Activated CD8-positive, alpha-beta T cell treated with anti-CD3 and anti-CD28 coated beads for 36 hours (primary cell): ENCODE measurements at regions of chr14 and their contacts with region 1.

Region 1: DNA sequence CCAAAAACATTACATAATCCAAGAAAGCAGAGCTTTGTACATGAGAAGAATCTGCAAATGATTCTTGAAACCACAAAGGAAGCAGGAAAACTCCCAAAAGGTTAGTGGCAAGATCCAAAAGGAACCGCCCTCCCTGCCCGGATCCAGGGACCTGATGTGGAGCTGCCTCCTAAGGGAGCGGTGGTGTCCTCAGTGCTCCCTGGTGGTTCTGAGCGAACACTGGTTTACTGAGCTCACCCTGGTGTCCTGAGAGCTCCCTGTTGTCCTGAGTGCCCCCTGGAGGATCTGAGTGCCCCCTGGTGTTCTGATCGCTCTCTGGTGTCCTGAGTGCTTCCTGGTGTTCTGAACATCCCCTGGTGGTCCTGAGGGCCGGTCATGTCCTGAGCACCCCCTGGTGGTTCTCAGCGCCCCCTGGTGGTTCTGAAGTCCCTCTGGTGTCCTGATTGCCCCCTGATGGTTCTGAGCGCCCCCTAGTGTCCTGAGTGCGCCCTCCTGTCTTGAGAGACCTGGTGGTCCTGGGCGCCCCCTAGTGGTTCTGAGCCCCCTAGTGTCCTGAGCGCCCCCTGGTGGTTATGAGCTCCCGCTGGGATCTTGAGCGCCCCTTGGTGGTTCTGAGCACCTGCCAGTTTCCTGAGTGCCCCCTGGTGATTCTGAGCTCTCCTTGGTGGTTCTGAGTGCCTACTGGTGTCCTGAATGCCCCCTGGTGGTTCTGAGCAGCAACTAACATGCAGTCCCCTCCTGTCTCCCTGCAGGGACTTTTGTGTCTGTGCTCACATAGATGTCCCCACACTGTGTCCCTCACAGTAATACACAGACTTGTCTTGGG is 891.1 kb downstream of the TMEM121 start:
- DNase-seq: peak; percentile 100
- ATAC-seq: peak; percentile 97
- H3K4me3 Mint-ChIP-seq: no peak overlapping the region
- H3K27ac Mint-ChIP-seq: no peak overlapping the region
- H3K4me1 Mint-ChIP-seq: no peaks in the 10 kb centered on the region
- H3K27me3 Mint-ChIP-seq: peaks cover 2% of the 10 kb centered on the region
- CTCF ChIP-seq: peak; percentile 100

Region 2: DNA sequence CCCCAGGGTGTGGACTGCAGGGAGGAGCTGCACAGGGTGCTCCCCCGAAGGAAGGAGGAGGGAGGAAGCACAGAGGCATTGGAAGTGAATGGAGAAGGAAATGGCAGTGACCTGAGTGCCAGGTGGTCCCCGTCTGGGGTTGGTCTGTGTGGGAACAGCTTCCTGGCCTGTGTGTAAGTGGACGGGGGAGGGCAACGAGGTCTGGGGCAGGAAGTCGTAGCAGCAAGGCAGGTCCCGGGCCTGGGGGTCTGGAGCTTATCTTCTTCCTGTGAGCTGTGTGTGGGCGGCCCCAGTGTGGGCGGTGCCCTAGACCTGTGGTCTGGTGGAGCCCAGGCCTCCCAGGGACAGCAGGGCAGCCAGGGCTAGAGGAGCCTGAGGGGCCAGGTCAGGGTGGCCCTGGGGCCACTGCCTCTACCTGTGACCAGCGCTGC is 508.9 kb before region 1 on chr14:
- CTCF ChIA-PET with region 1: no interaction called
- POLR2A ChIA-PET with region 1: no interaction called
- intact Hi-C with region 1: no loop called
- DNase-seq: peak; percentile 37
- ATAC-seq: no peak
- H3K4me3 Mint-ChIP-seq: no peak overlapping the region
- H3K27ac Mint-ChIP-seq: no peak overlapping the region
- H3K4me1 Mint-ChIP-seq: peaks cover 3% of the 10 kb centered on the region
- H3K27me3 Mint-ChIP-seq: no peaks in the 10 kb centered on the region
- CTCF ChIP-seq: no peak

Region 3: DNA sequence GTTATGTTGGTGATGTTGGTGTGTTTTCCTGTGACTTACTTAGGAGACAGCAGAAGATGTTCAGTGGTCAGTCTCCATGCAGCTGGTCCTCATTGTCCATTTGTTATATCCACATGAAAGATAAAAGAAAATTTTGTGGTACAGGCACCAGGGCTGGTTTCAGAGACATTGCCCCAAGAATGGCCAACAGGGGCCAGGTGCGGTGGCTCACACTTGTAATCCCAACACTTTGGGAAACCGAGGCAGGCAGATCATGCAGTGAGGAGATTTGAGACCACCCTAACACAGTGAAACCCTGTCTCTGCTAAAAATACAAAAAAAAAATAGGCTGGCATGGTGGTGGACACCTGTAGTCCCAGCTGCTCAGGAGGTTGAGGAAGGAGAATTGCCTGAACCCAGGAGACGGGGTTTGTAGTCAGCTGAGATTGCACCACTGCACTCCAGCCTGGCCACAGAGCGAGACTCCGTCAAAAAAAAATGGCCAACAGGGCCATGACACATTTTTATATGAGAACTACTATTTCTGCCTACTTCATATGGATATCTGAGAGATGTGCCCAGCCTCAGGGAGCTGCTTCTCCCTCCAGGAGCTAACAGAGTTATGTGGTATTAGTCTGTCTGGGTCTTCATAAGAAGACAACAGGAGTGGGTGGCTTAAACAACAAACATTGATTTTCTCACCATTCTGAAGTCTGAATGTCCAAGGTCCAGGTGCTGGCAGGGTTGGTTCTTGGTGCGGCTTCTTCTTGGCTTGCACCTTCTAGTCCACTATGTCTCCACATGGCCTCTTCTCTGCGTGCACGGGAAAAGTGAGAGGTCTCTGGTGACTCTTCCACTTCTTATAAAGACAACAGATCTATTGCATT is 69.3 kb before region 1 on chr14:
- CTCF ChIA-PET with region 1: interaction called, 60 read pairs
- POLR2A ChIA-PET with region 1: no interaction called
- intact Hi-C with region 1: no loop called
- DNase-seq: no peak
- ATAC-seq: no peak
- H3K4me3 Mint-ChIP-seq: no peak overlapping the region
- H3K27ac Mint-ChIP-seq: no peak overlapping the region
- H3K4me1 Mint-ChIP-seq: peaks cover 4% of the 10 kb centered on the region
- H3K27me3 Mint-ChIP-seq: peaks cover 3% of the 10 kb centered on the region
- CTCF ChIP-seq: no peak

Region 4: GRCh38 chr14:106395456-106396050 is 21.9 kb before region 1 on chr14:
- CTCF ChIA-PET with region 1: interaction called, 68 read pairs
- POLR2A ChIA-PET with region 1: interaction called, 3 read pairs
- intact Hi-C with region 1: no loop called
- DNase-seq: peak; percentile 67
- ATAC-seq: peak; percentile 64
- H3K4me3 Mint-ChIP-seq: peak overlapping the region; percentile 42
- H3K27ac Mint-ChIP-seq: peak overlapping the region; percentile 89
- H3K4me1 Mint-ChIP-seq: peaks cover 37% of the 10 kb centered on the region
- H3K27me3 Mint-ChIP-seq: peaks cover 8% of the 10 kb centered on the region
- CTCF ChIP-seq: no peak

Region 5: DNA sequence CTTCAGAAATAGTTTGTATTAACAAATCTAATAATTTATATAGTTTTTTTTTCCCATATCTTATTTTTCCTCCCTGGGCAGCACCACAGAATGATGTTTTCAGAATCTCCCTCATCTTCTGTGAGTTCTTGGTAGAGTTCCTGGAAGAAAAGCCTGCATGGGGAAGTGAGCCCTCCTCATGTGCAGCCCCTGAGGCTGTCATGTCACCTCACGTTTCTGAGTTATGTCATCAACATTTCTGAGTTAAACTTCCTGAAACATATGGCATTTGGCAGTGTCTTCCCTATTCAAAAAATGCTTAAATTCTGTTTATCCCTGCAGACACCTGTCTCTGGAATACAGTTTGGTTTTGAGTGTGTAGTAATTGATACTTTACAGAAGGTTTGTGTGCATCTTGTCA is 87.9 kb after region 1 on chr14:
- CTCF ChIA-PET with region 1: interaction called, 94 read pairs
- POLR2A ChIA-PET with region 1: no interaction called
- intact Hi-C with region 1: no loop called
- DNase-seq: no peak
- ATAC-seq: no peak
- H3K4me3 Mint-ChIP-seq: no peak overlapping the region
- H3K27ac Mint-ChIP-seq: no peak overlapping the region
- H3K4me1 Mint-ChIP-seq: peaks cover 52% of the 10 kb centered on the region
- H3K27me3 Mint-ChIP-seq: peaks cover 1% of the 10 kb centered on the region
- CTCF ChIP-seq: no peak

Region 6: DNA sequence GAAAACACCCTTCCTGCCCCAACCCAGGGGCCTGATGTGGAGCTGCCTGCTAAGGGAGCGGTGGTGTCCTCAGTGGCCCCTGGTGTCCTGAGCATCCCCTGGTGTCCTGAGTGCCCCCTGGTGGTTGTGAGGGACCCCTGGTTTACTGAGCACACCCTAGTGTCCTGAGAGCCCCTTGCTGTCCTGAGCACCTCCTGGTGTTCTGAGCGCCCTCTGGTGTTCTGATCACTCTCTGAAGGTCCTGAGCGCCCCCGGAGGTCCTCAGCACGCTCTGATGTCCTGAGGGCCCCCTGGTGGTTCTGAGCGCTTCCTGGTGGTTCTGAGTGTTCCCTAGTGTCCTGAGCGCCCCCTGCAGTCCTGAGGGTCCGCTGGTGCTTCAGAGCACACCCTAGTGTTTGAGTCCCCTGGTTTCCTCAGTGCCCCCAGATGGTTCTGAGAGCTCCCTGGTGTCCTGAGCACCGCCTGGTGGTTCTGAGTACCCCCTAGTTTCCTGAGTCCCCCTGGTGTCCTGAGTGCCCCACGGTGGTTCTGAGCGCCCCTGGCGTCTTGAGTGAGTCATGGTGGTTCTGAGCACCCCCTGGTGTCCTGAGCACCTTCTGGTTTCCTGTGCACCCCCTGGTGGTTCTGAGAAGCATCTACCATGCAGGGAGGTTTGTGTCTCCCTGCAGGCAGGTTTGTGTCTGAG is 113.1 kb after region 1 on chr14:
- CTCF ChIA-PET with region 1: interaction called, 270 read pairs
- POLR2A ChIA-PET with region 1: no interaction called
- intact Hi-C with region 1: no loop called
- DNase-seq: peak; percentile 79
- ATAC-seq: peak; percentile 96
- H3K4me3 Mint-ChIP-seq: no peak overlapping the region
- H3K27ac Mint-ChIP-seq: no peak overlapping the region
- H3K4me1 Mint-ChIP-seq: peaks cover 3% of the 10 kb centered on the region
- H3K27me3 Mint-ChIP-seq: peaks cover 5% of the 10 kb centered on the region
- CTCF ChIP-seq: peak; percentile 76

Region 7: GRCh38 chr14:106564058-106564656 is 146.7 kb after region 1 on chr14:
- CTCF ChIA-PET with region 1: interaction called, 25 read pairs
- POLR2A ChIA-PET with region 1: no interaction called
- intact Hi-C with region 1: no loop called
- DNase-seq: peak; percentile 85
- ATAC-seq: peak; percentile 80
- H3K4me3 Mint-ChIP-seq: no peak overlapping the region
- H3K27ac Mint-ChIP-seq: no peak overlapping the region
- H3K4me1 Mint-ChIP-seq: no peaks in the 10 kb centered on the region
- H3K27me3 Mint-ChIP-seq: peaks cover 12% of the 10 kb centered on the region
- CTCF ChIP-seq: peak; percentile 97

Region 8: GRCh38 chr14:106657460-106657859 is 240.0 kb after region 1 on chr14:
- CTCF ChIA-PET with region 1: interaction called, 26 read pairs
- POLR2A ChIA-PET with region 1: no interaction called
- intact Hi-C with region 1: no loop called
- DNase-seq: peak; percentile 87
- ATAC-seq: peak; percentile 63
- H3K4me3 Mint-ChIP-seq: no peak overlapping the region
- H3K27ac Mint-ChIP-seq: no peak overlapping the region
- H3K4me1 Mint-ChIP-seq: peaks cover 16% of the 10 kb centered on the region
- H3K27me3 Mint-ChIP-seq: peaks cover 1% of the 10 kb centered on the region
- CTCF ChIP-seq: peak; percentile 84